Heart right ventricle (tissue), 16 donors: ENCODE measurements at regions of chr6 and their contacts with region 1.

Region 1: DNA sequence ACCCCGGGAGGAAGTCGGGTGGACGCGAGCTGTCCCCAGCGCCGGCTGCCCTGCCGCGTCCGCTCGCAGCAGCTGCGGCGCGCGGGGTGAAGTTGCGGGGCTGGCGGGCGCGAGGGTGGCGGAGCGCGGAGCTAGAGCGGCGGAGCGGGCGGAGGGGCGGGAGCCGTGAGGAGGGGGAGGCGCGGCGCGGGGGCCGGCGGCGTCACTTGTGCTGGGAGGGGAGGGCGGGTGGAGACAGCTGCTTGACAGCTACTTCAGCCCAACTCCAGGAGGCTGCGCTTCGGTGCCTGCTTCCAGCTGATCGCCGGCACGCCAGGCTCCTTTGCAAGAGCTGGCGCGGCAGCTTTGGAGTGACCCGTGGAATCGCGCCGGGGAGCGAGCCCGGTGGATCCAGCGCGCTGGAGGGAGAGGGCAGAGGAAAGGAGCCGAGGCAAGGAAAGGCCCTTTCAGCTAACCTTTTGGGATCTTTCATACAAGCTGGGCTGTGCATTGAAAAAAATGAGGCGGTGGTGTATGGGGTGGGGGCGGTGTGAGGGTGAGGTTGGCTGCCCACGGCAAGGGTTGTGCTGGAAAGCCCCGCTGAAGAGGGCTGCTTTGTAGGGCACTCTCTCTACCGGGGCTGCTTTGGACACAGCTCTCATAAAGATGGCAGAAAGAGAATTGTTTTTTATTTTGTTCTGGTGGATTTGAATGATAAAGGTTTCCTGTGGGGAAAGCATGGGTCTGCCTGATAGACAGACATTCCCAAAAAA is 24.6 kb downstream of the RIPOR2 start:
- DNase-seq: peak; percentile 54 to 68
- ATAC-seq: peak; percentile 68 to 84 (median 77)
- H3K4me3 ChIP-seq: peak overlapping the region; percentile 50 to 81 (median 70)
- H3K27ac ChIP-seq: peak overlapping the region in 9 of 10 donors; percentile 63 to 82 (median 72)
- H3K4me1 ChIP-seq: peaks cover 0 to 62% (median 35%) of the 10 kb centered on the region in 9 donors
- H3K27me3 ChIP-seq: no peaks in the 10 kb centered on the region
- CTCF ChIP-seq: peak in 1 of 9 donors; percentile 11

Region 2: GRCh38 chr6:24855395-24856245 is 55.5 kb before region 1 on chr6:
- intact Hi-C with region 1: loop called in 2 of 10 experiments (anchors 5 kb)
- DNase-seq: peak; percentile 21 to 63
- ATAC-seq: peak; percentile 55 to 86 (median 70)
- H3K4me3 ChIP-seq: peak overlapping the region in 1 of 10 donors; percentile 4
- H3K27ac ChIP-seq: peak overlapping the region in 5 of 10 donors; percentile 3 to 88 (median 50)
- H3K4me1 ChIP-seq: peaks cover 0 to 56% (median 16%) of the 10 kb centered on the region in 9 donors
- H3K27me3 ChIP-seq: no peaks in the 10 kb centered on the region
- CTCF ChIP-seq: peak; percentile 83 to 96 (median 89)

Region 3: DNA sequence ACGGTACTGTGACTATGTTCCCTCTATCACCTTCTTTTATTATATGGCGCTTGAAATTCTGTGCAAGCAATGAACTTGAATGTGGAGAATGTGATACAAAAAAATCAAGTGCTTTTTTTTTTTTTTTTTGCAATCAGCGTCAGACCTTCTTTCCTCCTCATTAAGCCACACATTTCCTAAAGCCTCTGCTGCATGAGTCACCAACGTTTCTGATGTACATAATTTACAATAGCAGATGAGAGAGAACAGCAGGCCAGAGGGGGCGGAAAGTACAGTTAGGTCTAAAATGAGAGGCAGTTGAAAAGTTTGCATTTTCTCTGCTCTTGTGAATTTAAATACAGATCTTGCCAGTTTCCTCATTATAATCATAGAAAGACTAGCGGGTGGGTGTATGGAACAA is 139.2 kb after region 1 on chr6:
- intact Hi-C with region 1: no loop called
- DNase-seq: no peak
- ATAC-seq: no peak
- H3K4me3 ChIP-seq: no peak overlapping the region
- H3K27ac ChIP-seq: peak overlapping the region in 1 of 10 donors; percentile 65
- H3K4me1 ChIP-seq: peaks cover 0 to 50% (median 4%) of the 10 kb centered on the region in 9 donors
- H3K27me3 ChIP-seq: no peaks in the 10 kb centered on the region
- CTCF ChIP-seq: no peak